Activated CD8-positive, alpha-beta T cell treated with anti-CD3 and anti-CD28 coated beads for 36 hours (primary cell): ENCODE measurements at regions of chr17 and their contacts with region 1.

Region 1: DNA sequence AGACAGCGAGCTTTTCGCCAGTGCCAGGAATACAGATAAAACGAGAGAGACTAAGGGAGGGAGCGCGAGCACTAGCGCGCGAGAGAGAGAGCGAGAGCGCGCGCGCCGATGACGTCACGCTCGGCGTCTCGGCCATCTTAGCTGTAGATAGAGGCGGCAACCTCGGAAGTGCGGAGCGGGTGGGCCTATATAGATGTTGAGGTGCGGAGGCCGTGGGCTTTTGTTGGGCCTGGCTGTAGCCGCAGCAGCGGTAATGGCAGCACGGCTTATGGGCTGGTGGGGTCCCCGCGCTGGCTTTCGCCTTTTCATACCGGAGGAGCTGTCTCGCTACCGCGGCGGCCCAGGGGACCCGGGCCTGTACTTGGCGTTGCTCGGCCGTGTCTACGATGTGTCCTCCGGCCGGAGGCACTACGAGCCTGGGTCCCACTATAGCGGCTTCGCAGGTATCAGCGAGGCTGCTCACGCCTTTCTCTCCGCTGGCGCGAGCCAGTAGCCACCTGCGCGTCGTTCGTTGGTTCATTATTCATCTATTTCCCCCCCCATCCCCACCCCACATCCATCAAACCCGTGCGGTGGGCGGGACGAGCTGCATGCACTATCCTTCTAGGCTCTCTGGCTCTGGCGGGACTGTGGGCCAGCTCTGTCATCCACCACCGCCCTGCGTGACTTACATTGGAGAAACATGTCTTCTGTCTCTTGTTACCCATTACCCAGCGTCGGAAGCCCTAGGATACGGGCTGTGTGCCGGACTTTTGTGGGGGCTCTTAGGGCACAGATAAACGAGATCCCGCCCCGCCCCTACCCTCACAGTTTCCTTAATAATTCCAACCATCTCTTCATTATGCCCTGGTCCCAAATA is 795 bp downstream of the CYB5D2 start:
- DNase-seq: peak; percentile 94
- ATAC-seq: peak; percentile 81
- H3K4me3 Mint-ChIP-seq: peak overlapping the region; percentile 82
- H3K27ac Mint-ChIP-seq: peak overlapping the region; percentile 98
- H3K4me1 Mint-ChIP-seq: peaks cover 45% of the 10 kb centered on the region
- H3K27me3 Mint-ChIP-seq: no peaks in the 10 kb centered on the region
- CTCF ChIP-seq: no peak

Region 2: DNA sequence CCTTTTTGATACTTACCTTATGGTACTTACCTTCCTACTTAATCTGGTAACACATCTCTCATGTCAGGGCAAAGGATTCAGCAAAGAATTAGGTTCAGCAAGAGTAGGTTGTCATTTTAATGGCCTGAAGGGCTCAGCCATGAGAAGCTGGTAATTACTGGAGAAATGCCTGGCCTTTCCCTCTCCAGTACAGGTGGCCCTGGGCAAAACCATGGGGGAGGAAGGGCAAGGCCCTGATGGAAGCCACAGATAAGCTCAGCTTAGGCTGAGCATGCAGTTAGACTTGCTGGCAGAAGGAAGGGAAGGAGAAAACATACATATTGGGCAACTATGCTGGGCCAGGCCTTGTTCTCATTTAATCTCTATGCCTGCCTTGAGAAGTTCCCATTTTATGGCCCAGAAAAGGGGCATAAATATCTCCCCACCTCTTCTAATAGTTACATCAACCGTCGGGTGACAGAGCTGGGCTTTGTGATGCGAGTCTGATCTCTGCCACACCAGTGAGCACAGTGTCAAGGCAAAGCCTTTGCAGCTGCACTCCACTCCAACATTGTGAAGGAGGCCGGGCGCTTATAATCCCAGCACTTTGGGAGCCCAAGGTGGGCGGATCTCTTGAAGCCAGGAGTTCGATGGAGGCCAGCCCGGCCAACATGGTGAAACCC is 17.9 kb after region 1 on chr17:
- CTCF ChIA-PET with region 1: interaction called, 3 read pairs
- POLR2A ChIA-PET with region 1: interaction called, 14 read pairs
- intact Hi-C with region 1: no loop called
- DNase-seq: no peak
- ATAC-seq: no peak
- H3K4me3 Mint-ChIP-seq: no peak overlapping the region
- H3K27ac Mint-ChIP-seq: peak overlapping the region; percentile 25
- H3K4me1 Mint-ChIP-seq: no peaks in the 10 kb centered on the region
- H3K27me3 Mint-ChIP-seq: no peaks in the 10 kb centered on the region
- CTCF ChIP-seq: no peak